Activated CD4-positive, alpha-beta T cell treated with anti-CD3 and anti-CD28 coated beads for 36 hours (primary cell): ENCODE measurements at regions of chr3 and their contacts with region 1.

Region 1: DNA sequence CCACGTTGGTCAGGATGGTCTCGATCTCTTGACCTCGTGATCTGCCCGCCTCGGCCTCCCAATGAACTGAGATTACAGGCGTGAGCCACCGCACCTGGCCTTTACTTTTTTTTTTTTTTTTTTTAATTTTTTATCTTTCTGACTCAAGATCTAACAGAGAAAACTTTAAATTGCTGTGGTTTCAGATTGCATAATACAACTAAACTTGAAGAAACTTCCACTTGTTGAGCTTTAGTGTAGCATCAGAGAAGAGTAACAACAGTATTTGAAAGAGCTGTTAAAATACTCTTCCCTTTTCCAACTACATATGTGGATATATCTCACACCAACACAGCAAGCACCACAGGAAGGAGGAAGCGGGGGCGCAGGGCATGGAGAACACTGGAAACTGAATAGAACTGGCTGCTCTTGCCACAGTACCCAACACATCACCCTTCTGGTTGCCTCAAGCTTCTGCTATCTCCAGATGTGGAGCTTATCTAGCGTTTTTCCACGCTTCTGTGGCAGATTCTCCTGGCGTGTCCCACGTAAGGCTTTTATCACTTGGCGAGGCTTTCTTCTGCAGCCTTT is 45.4 kb downstream of the MAP6D1 start:
- DNase-seq: no peak
- ATAC-seq: no peak
- H3K4me3 Mint-ChIP-seq: no peak overlapping the region
- H3K27ac Mint-ChIP-seq: no peak overlapping the region
- H3K4me1 Mint-ChIP-seq: peaks cover 2% of the 10 kb centered on the region
- H3K27me3 Mint-ChIP-seq: no peaks in the 10 kb centered on the region

Region 2: DNA sequence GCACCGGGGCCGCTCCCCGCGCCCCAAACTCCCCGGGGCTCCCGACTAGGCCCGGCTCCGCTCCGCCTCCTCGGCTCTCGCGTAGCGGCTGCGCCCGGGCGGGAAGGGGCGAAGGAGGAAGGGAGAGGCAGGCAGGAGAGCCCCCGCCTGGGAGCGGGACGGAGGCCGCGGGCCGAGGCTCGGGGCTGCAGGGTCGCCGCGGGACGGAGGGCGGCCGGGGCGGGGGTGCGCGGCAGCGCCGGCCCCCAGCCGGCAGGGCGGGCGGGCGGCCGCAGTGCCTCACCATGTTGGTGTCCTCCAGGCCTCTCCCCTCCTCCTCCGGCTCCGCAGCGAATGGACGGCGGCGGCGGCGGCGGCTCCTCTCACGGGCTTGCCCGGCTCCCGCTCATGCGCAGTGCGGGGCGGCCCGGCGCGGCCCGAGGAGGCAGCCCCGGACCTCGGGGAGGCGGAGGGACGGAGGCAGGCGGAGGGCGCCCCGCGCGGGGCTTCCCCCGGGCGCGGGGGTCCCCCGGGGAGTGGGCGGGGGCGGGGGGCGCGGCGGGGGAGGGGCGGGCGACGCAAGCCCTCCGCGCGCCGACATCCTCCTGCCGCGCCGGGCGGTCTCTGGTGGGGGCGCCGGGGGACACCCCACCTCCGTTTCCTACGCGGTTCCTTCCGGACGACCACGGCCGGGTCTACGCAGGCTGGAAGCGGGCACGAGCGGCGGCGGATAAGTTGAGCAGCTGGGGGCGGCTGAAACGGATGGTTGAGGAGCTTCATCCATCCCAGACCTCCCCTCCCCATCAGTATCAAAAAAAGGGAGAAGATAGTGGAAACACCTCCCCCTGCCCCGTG is 799.6 kb before region 1 on chr3 and contains the start of gene DCUN1D1:
- CTCF ChIA-PET with region 1: no interaction called
- POLR2A ChIA-PET with region 1: no interaction called
- intact Hi-C with region 1: no loop called
- DNase-seq: peak; percentile 93
- ATAC-seq: peak; percentile 94
- H3K4me3 Mint-ChIP-seq: peak within 1 kb of the TSS; percentile 95
- H3K27ac Mint-ChIP-seq: peak within 1 kb of the TSS; percentile 92
- H3K4me1 Mint-ChIP-seq: peaks cover 25% of the 10 kb centered on the region
- H3K27me3 Mint-ChIP-seq: no peaks in the 10 kb centered on the region
- total RNA-seq, gene DCUN1D1: 40.0 to 52.9 TPM

Region 3: GRCh38 chr3:183710231-183710630 is 69.8 kb before region 1 on chr3:
- CTCF ChIA-PET with region 1: no interaction called
- POLR2A ChIA-PET with region 1: no interaction called
- intact Hi-C with region 1: loop called in 1 of 2 experiments (anchors 5 kb)
- DNase-seq: no peak
- ATAC-seq: no peak
- H3K4me3 Mint-ChIP-seq: no peak overlapping the region
- H3K27ac Mint-ChIP-seq: no peak overlapping the region
- H3K4me1 Mint-ChIP-seq: peaks cover 13% of the 10 kb centered on the region
- H3K27me3 Mint-ChIP-seq: no peaks in the 10 kb centered on the region

Region 4: GRCh38 chr3:183766745-183767606 is 13.0 kb before region 1 on chr3:
- CTCF ChIA-PET with region 1: interaction called, 5 read pairs
- POLR2A ChIA-PET with region 1: interaction called, 11 read pairs
- intact Hi-C with region 1: no loop called
- DNase-seq: peak; percentile 85
- ATAC-seq: peak; percentile 95
- H3K4me3 Mint-ChIP-seq: no peak overlapping the region
- H3K27ac Mint-ChIP-seq: no peak overlapping the region
- H3K4me1 Mint-ChIP-seq: peaks cover 9% of the 10 kb centered on the region
- H3K27me3 Mint-ChIP-seq: no peaks in the 10 kb centered on the region